CD8-positive, alpha-beta T cell (primary cell): ENCODE measurements at regions of chr11 and their contacts with region 1.

Region 1: DNA sequence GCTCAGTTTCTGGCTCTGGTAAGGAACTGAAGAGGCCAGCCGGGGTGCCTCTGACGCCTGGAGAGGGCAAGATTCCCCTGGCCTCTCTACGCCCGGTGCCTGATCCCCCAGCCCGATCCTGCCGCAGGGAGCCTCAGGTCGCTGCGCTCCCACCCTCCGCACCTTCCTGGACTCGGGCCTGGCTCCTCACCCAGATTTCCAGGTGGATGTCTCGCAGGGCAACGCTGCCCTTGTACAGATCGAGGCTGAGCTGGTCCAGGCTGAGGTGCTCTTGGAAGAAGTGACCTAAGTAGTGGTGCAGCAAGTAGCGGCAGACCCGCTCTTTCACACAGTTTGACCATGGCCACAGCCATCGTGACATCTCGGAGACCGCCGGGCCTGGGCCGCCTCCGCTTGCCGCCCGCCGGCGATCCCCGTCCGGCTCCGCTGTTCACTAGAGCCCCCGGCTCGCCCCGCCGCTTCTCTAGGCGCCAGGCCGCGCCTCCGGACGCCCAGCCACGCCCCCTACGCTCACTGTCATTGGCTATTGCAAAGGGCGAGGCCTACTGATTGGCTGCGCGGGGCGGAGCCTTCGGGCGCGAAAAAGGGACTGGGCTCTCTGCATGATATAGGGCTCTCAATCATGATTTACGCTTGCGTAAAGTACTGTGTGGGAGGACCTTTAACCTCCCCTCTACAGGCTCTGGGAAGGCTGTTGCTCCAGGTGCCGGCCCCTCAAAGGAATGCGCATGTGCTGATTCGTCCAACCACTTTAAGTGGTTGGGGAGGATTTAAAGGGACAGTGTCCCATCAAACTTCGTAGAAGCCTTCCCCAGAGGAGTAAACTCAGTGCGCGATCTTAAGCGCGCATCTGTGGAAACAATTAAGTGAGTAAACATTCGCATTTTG is at the start of gene ATG2A:
- DNase-seq: peak; percentile 98 to 100 (median 99)
- ATAC-seq: peak; percentile 96
- H3K4me3 ChIP-seq: peak within 1 kb of the TSS; percentile 76 to 79
- H3K4me3 Mint-ChIP-seq: peak within 1 kb of the TSS; percentile 94
- H3K27ac ChIP-seq: peak within 1 kb of the TSS; percentile 77 to 93
- H3K27ac Mint-ChIP-seq: peak within 1 kb of the TSS; percentile 94
- H3K4me1 ChIP-seq: peaks cover 26% of the 10 kb centered on the region
- H3K4me1 Mint-ChIP-seq: peaks cover 22% of the 10 kb centered on the region
- H3K27me3 ChIP-seq: no peaks in the 10 kb centered on the region
- H3K27me3 Mint-ChIP-seq: no peaks in the 10 kb centered on the region
- CTCF ChIP-seq: no peak
- total RNA-seq, gene ATG2A: 285 to 311 TPM

Region 2: GRCh38 chr11:64500176-64501013 is 416.6 kb before region 1 on chr11:
- CTCF ChIA-PET with region 1: no interaction called
- POLR2A ChIA-PET with region 1: no interaction called
- intact Hi-C with region 1: no loop called
- DNase-seq: no peak
- ATAC-seq: no peak
- H3K4me3 ChIP-seq: no peak overlapping the region
- H3K4me3 Mint-ChIP-seq: no peak overlapping the region
- H3K27ac ChIP-seq: no peak overlapping the region
- H3K27ac Mint-ChIP-seq: no peak overlapping the region
- H3K4me1 ChIP-seq: no peaks in the 10 kb centered on the region
- H3K4me1 Mint-ChIP-seq: no peaks in the 10 kb centered on the region
- H3K27me3 ChIP-seq: peaks cover 0 to 2% of the 10 kb centered on the region in 2 experiments
- H3K27me3 Mint-ChIP-seq: peaks cover 17% of the 10 kb centered on the region
- CTCF ChIP-seq: no peak

Region 3: DNA sequence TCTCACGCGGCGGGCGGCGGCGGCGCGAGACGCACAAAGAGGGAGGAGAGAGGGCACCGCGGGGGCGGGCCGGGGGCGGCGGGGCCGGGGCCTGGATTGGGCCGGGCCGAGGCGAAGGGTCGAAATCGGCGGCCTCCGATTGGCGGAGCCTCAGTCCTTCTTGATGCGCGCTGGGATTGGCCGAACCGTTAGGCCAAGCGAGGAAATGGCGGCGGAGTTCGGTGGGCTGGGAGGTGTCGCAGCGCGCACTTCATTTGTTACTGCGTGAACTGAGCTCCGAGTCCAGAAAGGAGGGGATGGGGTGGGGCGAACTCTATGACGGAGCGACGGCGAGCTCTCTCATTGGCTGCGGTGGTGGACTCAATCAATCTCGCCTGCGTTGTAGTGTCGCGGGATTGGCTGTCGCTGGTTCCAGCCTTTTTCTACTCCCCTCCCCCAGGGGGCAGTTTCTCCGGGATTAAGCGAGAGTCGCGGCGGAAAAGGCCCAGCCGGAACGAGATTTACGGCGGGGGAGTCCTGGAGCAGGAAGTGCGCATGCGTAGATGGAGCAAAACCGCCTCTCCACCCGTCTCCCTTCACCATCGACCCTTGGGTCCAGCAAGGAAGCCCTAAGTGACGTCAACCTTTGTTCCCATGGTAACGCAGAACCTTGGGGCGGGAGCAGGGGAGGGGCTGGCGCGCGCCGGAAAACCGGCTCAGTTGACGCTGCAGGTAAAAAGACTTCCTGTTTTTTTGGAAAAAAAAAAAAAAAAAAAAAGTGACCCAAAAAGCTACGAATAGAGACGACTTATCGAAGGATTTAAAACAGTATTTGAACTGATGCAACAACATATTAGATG is 138.3 kb before region 1 on chr11 and contains the start of gene SF1:
- CTCF ChIA-PET with region 1: no interaction called
- POLR2A ChIA-PET with region 1: no interaction called
- intact Hi-C with region 1: loop called in 1 of 2 experiments (anchors 1 kb)
- DNase-seq: peak; percentile 97 to 100 (median 99)
- ATAC-seq: peak; percentile 82
- H3K4me3 ChIP-seq: peak within 1 kb of the TSS; percentile 70 to 97
- H3K4me3 Mint-ChIP-seq: peak within 1 kb of the TSS; percentile 93
- H3K27ac ChIP-seq: peak within 1 kb of the TSS; percentile 93 to 98
- H3K27ac Mint-ChIP-seq: peak within 1 kb of the TSS; percentile 99
- H3K4me1 ChIP-seq: peaks cover 53% of the 10 kb centered on the region
- H3K4me1 Mint-ChIP-seq: peaks cover 58% of the 10 kb centered on the region
- H3K27me3 ChIP-seq: no peaks in the 10 kb centered on the region
- H3K27me3 Mint-ChIP-seq: no peaks in the 10 kb centered on the region
- CTCF ChIP-seq: no peak
- total RNA-seq, gene SF1: 1,574 to 1,625 TPM

Region 4: DNA sequence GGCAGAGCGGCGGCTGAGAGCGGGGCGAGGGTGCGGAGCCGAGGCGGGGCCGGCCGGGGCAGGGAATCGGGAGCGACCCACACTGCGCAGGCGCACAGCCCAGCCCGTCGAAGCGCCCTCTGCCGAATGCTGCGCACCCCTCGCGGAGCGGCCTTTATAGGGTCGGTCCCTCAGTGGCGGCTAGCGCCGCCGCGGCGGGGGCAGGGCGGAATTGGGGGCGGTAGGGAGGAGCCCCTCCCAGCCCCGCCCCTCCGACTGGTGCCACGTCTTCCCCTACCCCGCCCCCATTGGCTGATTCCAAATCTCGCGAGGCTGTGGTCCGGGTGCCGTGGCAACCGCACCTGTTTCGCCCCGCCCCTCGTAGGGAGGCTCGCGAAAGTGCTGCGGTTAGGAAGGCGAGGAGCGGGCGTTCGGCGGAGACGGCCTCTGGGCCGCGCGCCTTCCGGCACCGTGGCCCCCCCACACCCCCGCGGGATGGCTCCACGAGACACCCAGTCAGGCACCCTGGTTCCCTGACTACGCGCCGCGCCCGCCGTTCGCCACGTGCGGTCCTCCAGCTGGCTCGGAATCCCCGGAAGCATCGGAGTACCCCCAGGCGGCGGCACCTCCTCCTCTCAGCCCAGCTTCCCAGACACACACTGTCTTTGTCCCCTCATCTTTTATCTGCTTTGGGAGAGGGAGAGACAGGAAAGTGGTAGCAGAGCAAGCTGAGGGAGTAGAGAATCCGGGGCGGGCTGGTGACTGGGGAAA is 38.4 kb before region 1 on chr11 and contains the start of gene EHD1:
- CTCF ChIA-PET with region 1: no interaction called
- POLR2A ChIA-PET with region 1: interaction called, 3 read pairs
- intact Hi-C with region 1: loop called (anchors 1 kb)
- DNase-seq: peak; percentile 99 to 100 (median 100)
- ATAC-seq: peak; percentile 82
- H3K4me3 ChIP-seq: peak within 1 kb of the TSS; percentile 87 to 100
- H3K4me3 Mint-ChIP-seq: peak within 1 kb of the TSS; percentile 95
- H3K27ac ChIP-seq: peak within 1 kb of the TSS; percentile 91 to 96
- H3K27ac Mint-ChIP-seq: peak within 1 kb of the TSS; percentile 97
- H3K4me1 ChIP-seq: peaks cover 57% of the 10 kb centered on the region
- H3K4me1 Mint-ChIP-seq: peaks cover 63% of the 10 kb centered on the region
- H3K27me3 ChIP-seq: no peaks in the 10 kb centered on the region
- H3K27me3 Mint-ChIP-seq: no peaks in the 10 kb centered on the region
- CTCF ChIP-seq: peak; percentile 29
- total RNA-seq, gene EHD1: 187 to 212 TPM

Region 5: GRCh38 chr11:65027213-65028067 is 110.4 kb after region 1 on chr11 and contains the start of gene SNX15:
- CTCF ChIA-PET with region 1: no interaction called
- POLR2A ChIA-PET with region 1: no interaction called
- intact Hi-C with region 1: loop called (anchors 1 to 2 kb)
- DNase-seq: peak; percentile 77 to 96 (median 90)
- ATAC-seq: peak; percentile 96
- H3K4me3 ChIP-seq: peak within 1 kb of the TSS; percentile 34 to 54
- H3K4me3 Mint-ChIP-seq: peak within 1 kb of the TSS; percentile 69
- H3K27ac ChIP-seq: peak within 1 kb of the TSS; percentile 41 to 71
- H3K27ac Mint-ChIP-seq: peak within 1 kb of the TSS; percentile 80
- H3K4me1 ChIP-seq: peaks cover 19% of the 10 kb centered on the region
- H3K4me1 Mint-ChIP-seq: peaks cover 18% of the 10 kb centered on the region
- H3K27me3 ChIP-seq: no peaks in the 10 kb centered on the region
- H3K27me3 Mint-ChIP-seq: no peaks in the 10 kb centered on the region
- CTCF ChIP-seq: peak; percentile 80
- total RNA-seq, gene SNX15: 10.4 to 14.0 TPM

Region 6: DNA sequence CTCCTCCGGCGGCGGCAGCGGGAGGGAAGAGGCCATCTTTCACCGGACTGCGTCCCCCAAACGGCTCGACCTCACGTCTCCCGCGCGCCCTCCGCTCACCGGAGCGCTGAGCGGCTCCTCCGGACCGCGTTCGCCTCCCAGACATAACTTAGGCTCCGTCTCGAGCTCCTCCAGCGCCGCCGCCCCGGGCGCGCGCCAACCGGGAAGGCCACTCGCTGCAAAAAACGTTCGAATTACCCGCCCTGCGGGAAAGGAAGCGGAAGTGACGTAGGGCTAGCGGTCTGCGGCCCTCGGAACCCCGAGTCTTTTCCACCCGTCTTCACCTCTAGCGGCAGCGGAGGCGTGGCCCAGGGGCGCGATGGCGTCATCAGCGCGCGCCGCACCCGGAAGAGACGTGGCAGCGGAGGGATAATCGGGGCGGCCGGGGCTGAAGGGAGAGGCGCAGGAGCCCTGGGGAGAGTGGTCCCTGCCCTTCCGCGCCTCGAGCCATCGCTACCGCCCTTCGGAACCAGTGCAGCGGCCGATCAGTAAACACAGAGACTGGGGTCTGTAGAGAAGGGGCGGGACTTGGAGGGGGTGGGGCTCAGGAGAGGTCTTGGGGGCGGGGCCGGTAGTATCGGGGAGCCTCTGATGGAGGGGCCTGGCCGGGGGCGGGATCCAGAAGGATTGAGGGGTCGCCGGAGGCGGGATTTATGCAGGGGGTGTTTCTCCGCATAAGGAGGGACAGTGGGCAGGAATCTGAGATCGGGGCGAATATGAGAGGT is 167.0 kb after region 1 on chr11 and contains the starts of genes CDCA5 and ZFPL1:
- CTCF ChIA-PET with region 1: no interaction called
- POLR2A ChIA-PET with region 1: no interaction called
- intact Hi-C with region 1: loop called (anchors 1 to 2 kb)
- DNase-seq: peak; percentile 94 to 98 (median 96)
- ATAC-seq: peak; percentile 88
- H3K4me3 ChIP-seq: peak within 1 kb of the TSS; percentile 71 to 87
- H3K4me3 Mint-ChIP-seq: peak within 1 kb of the TSS; percentile 93
- H3K27ac ChIP-seq: peak within 1 kb of the TSS; percentile 90 to 97
- H3K27ac Mint-ChIP-seq: peak within 1 kb of the TSS; percentile 99
- H3K4me1 ChIP-seq: peaks cover 17% of the 10 kb centered on the region
- H3K4me1 Mint-ChIP-seq: peaks cover 27% of the 10 kb centered on the region
- H3K27me3 ChIP-seq: no peaks in the 10 kb centered on the region
- H3K27me3 Mint-ChIP-seq: no peaks in the 10 kb centered on the region
- CTCF ChIP-seq: no peak
- total RNA-seq, gene CDCA5: 0.76 to 1.2 TPM
- total RNA-seq, gene ZFPL1: 52.3 to 52.6 TPM